Psoas muscle (tissue), 8 donors: ENCODE measurements at regions of chr11 and their contacts with region 1.

Region 1: DNA sequence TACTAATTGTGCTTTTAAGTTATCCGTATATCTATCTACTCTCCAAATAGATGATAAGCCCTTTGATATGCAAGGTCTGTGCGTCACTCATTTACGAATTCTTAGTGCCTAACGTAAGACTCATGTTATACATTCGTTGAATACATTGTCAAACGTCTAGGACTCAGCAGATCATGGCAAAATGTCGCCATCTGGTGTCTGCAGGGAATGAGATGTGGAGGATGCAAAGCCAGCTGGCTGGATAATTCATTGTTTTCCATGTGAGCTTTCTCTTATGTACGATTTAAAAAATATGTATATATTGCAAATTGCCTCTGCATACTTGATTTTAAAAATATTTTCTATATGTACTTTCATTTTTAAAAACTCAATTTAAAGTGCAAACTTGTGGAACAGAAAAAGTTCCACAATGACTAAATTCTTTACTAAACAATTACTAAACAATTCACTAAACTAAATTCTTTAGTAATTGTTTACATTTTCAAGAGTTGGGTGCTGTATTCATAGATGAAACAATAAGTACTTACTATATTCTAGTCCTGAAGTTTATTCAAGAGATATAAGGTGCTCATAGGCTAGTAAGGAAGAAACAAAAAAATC is 33.8 kb downstream of the ZNF202 start:
- DNase-seq: peak in 1 of 2 donors; percentile 25
- ATAC-seq: peak; percentile 74 to 94 (median 84)
- H3K4me3 ChIP-seq: no peak overlapping the region
- H3K27ac ChIP-seq: no peak overlapping the region
- H3K4me1 ChIP-seq: no peaks in the 10 kb centered on the region
- H3K27me3 ChIP-seq: no peaks in the 10 kb centered on the region
- CTCF ChIP-seq: peak; percentile 85

Region 2: DNA sequence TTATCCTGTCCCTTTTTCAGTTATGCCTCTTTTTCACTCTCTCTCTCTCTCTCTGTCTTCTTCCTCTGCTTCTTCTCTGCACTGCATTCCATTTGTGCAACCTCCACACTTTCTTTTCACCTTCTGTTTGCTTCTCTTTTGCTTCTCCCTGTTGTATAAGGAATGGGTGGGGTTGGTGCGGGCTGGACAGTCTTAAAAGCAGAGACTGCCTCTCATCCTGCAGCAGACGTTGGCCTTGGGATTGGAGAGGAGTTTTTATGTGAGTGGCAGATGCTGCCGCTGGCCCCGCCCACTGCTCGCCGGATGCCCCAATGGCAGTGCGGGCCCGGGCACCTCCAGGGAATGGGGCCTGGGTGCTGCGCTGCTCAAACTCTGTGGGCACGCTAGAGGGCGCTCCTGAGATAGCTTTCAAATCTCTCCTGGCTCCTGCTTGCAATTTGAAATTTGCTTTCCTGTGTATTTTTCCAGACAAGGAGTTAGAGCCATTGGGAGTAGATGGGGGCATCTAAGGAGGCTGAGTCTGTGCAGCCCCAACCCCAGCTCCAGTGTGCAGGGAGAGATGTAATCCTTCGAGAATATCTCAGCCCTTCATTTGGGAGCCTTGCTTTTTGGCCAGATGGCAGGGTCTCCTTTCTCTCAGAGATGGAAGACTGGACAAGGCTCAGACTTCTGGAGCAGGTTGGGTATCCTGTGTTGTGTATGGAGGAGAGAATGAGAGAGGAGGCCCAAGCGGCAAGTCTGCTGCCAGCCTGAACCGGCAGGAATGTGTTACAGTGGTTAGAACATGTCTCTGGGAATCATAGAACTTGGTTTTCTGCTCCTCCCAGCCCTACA is 196.5 kb before region 1 on chr11:
- intact Hi-C with region 1: loop called in 1 of 2 experiments (anchors 10 kb)
- DNase-seq: peak; percentile 78 to 87
- ATAC-seq: peak; percentile 82 to 94 (median 93)
- H3K4me3 ChIP-seq: no peak overlapping the region
- H3K27ac ChIP-seq: no peak overlapping the region
- H3K4me1 ChIP-seq: no peaks in the 10 kb centered on the region
- H3K27me3 ChIP-seq: no peaks in the 10 kb centered on the region
- CTCF ChIP-seq: peak; percentile 76

Region 3: GRCh38 chr11:123560006-123560405 is 147.7 kb before region 1 on chr11:
- intact Hi-C with region 1: no loop called
- DNase-seq: peak; percentile 67 to 81
- ATAC-seq: peak; percentile 86 to 96 (median 90)
- H3K4me3 ChIP-seq: peak overlapping the region; percentile 62
- H3K27ac ChIP-seq: no peak overlapping the region
- H3K4me1 ChIP-seq: peaks cover 4% of the 10 kb centered on the region
- H3K27me3 ChIP-seq: no peaks in the 10 kb centered on the region
- CTCF ChIP-seq: no peak

Region 4: GRCh38 chr11:123580557-123581275 is 127.0 kb before region 1 on chr11:
- intact Hi-C with region 1: loop called (anchors 1 to 5 kb)
- DNase-seq: peak; percentile 49 to 75
- ATAC-seq: peak; percentile 80 to 88 (median 86)
- H3K4me3 ChIP-seq: no peak overlapping the region
- H3K27ac ChIP-seq: no peak overlapping the region
- H3K4me1 ChIP-seq: no peaks in the 10 kb centered on the region
- H3K27me3 ChIP-seq: peaks cover 0 to 12% (median 0%) of the 10 kb centered on the region in 3 donors
- CTCF ChIP-seq: peak; percentile 91

Region 5: GRCh38 chr11:123640677-123641494 is 66.8 kb before region 1 on chr11:
- intact Hi-C with region 1: loop called (anchors 1 to 2 kb)
- DNase-seq: peak; percentile 42 to 73
- ATAC-seq: peak; percentile 85 to 95 (median 90)
- H3K4me3 ChIP-seq: no peak overlapping the region
- H3K27ac ChIP-seq: no peak overlapping the region
- H3K4me1 ChIP-seq: peaks cover 14% of the 10 kb centered on the region
- H3K27me3 ChIP-seq: no peaks in the 10 kb centered on the region
- CTCF ChIP-seq: peak; percentile 86

Region 6: GRCh38 chr11:123856444-123856843 is 148.7 kb after region 1 on chr11:
- intact Hi-C with region 1: no loop called
- DNase-seq: no peak
- ATAC-seq: no peak
- H3K4me3 ChIP-seq: no peak overlapping the region
- H3K27ac ChIP-seq: no peak overlapping the region
- H3K4me1 ChIP-seq: no peaks in the 10 kb centered on the region
- H3K27me3 ChIP-seq: no peaks in the 10 kb centered on the region
- CTCF ChIP-seq: no peak